ENCODE measurements at regions of chr2 and their contacts with region 1.

Region 1: GRCh38 chr2:47386551-47386950 is 16.4 kb upstream of the MSH2 start:
- DNase-seq: no peak
- H3K4me3 Mint-ChIP-seq: no peak overlapping the region
- H3K27ac Mint-ChIP-seq: no peak overlapping the region
- H3K4me1 Mint-ChIP-seq: no peaks in the 10 kb centered on the region
- H3K27me3 Mint-ChIP-seq: peaks cover 25% of the 10 kb centered on the region

Region 2: DNA sequence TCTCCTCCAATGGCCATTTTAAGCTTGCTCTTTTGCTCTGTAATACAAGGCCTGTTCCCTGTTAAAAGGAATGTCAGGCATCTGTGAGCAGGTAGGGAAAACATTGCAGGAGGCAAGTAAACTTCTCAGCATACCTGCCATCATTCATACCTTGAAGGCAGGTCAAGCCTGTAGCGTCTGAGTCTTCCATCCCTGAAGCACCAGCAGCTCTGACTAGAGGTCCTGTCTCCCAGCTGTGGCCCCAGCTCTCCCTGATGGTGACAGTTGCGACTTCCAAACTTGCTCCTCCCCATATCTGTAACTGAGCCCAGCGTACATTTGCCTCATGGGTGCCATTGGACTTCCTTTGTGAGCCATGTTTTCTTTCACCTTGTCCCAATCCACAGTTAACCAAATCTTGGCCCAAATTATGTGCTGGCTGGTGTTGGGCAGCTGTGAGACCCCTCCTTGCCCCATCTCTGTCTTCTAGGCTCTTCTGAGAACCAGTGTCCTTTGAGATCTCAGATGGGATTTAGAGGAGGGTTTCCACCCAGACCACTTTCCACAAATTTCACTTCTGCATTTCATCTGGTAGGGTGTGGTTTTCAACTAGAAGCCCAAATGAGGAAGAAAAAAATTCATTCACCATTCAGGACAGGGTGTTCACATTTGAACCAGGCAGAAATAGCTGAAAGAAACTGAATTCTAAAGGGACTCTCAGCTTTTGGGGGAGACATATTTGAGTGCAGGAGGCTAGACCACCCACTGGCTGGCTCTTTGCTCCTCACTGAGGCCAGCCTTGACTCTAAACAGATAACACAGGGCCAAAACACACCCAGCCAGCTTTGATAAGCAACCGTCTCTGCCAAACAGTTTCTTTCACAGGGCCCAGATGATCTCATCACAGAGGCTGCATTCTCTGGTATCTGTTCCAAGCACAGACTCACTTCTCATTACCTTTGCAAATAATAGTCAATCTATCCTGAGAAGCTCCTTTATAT is 50.0 kb before region 1 on chr2:
- CTCF ChIA-PET with region 1: interaction called, 52 read pairs
- POLR2A ChIA-PET with region 1: no interaction called
- DNase-seq: no peak
- H3K4me3 Mint-ChIP-seq: no peak overlapping the region
- H3K27ac Mint-ChIP-seq: no peak overlapping the region
- H3K4me1 Mint-ChIP-seq: no peaks in the 10 kb centered on the region
- H3K27me3 Mint-ChIP-seq: peaks cover 9% of the 10 kb centered on the region

Region 3: DNA sequence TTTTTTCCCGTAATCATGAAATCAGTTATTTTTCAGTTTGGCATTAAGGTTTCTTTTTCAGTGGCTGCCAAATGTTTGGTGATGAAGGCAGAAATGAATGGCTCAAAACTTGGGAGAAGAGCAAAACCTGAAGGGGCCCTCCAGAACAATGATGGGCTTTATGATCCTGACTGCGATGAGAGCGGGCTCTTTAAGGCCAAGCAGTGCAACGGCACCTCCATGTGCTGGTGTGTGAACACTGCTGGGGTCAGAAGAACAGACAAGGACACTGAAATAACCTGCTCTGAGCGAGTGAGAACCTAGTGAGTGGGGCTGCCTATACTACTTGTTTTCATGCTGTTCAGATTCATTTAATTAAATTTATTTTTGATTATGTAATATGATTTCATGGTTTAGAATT is 12.8 kb before region 1 on chr2:
- CTCF ChIA-PET with region 1: interaction called, 10 read pairs
- POLR2A ChIA-PET with region 1: no interaction called
- DNase-seq: no peak
- H3K4me3 Mint-ChIP-seq: no peak overlapping the region
- H3K27ac Mint-ChIP-seq: no peak overlapping the region
- H3K4me1 Mint-ChIP-seq: peaks cover 2% of the 10 kb centered on the region
- H3K27me3 Mint-ChIP-seq: peaks cover 22% of the 10 kb centered on the region

Region 4: GRCh38 chr2:47402805-47403608 is 16.5 kb after region 1 on chr2 and contains the start of gene MSH2:
- CTCF ChIA-PET with region 1: interaction called, 35 read pairs
- POLR2A ChIA-PET with region 1: interaction called, 3 read pairs
- DNase-seq: peak; percentile 93
- H3K4me3 Mint-ChIP-seq: peak within 1 kb of the TSS; percentile 94
- H3K27ac Mint-ChIP-seq: peak within 1 kb of the TSS; percentile 82
- H3K4me1 Mint-ChIP-seq: peaks cover 39% of the 10 kb centered on the region
- H3K27me3 Mint-ChIP-seq: no peaks in the 10 kb centered on the region
- total RNA-seq, gene MSH2: 39.0 to 39.3 TPM

Measured in activated CD4-positive, alpha-beta memory T cell treated with anti-CD3 and anti-CD28 coated beads, Interleukin-2, amount 10 ng/mL, durations not matched to agents 7 days and 5 days (primary cell).